ENCODE measurements at regions of chr17 and their contacts with region 1.

Region 1: DNA sequence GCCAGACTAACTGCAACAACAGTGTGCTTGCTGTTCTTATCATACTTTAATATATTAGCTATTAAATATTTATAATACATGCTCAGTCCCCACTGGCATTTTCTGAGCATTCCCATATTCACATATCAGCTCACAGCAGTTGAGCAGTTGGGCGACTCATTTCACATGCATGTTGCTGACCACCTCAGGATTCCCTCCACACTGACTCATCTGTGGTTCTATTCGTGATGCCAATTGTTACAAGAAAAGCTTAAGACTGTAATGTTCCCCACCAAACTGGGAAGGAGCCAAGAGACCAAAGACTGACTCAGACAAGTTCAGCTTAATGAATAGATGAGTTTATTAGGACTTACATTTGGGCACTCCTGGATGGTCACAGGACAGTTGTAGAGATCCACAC is 100.3 kb upstream of the KIF2B start:
- DNase-seq: peak; percentile 98
- ATAC-seq: peak; percentile 74
- H3K4me3 ChIP-seq: no peak overlapping the region
- H3K27ac ChIP-seq: no peak overlapping the region
- H3K4me1 ChIP-seq: no peaks in the 10 kb centered on the region
- H3K27me3 ChIP-seq: no peaks in the 10 kb centered on the region
- CTCF ChIP-seq: no peak
- POLR2A ChIP-seq: no peak
- RAD21 ChIP-seq: no peak

Region 2: DNA sequence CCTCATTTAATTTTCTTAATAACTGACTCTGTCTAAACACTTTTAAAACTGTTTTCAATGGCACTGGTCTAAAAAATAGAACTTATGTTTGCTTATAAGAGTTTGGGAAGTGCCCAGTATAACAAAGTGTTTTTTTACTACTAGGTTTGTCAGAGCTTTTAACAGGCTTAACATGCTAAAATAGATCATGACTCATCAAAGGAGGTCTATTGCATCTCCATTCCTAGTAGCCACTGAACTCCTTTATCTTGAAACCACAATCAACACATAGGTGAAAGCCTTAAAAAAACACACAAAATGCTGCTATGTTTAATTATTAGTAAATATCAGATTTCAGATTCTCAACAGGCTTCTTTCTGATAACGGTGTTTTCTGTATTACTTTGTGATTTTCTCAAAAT is 96.1 kb before region 1 on chr17:
- CTCF ChIA-PET with region 1: no interaction called
- POLR2A ChIA-PET with region 1: no interaction called
- dilution Hi-C with region 1: no loop called
- in situ Hi-C with region 1: no loop called
- intact Hi-C with region 1: loop called (anchors 5 kb)
- DNase-seq: peak; percentile 67
- ATAC-seq: no peak
- H3K4me3 ChIP-seq: no peak overlapping the region
- H3K27ac ChIP-seq: no peak overlapping the region
- H3K4me1 ChIP-seq: no peaks in the 10 kb centered on the region
- H3K27me3 ChIP-seq: no peaks in the 10 kb centered on the region
- CTCF ChIP-seq: no peak
- POLR2A ChIP-seq: no peak
- RAD21 ChIP-seq: no peak